Activated CD8-positive, alpha-beta T cell treated with anti-CD3 and anti-CD28 coated beads for 36 hours (primary cell): ENCODE measurements at regions of chr17 and their contacts with region 1.

Region 1: DNA sequence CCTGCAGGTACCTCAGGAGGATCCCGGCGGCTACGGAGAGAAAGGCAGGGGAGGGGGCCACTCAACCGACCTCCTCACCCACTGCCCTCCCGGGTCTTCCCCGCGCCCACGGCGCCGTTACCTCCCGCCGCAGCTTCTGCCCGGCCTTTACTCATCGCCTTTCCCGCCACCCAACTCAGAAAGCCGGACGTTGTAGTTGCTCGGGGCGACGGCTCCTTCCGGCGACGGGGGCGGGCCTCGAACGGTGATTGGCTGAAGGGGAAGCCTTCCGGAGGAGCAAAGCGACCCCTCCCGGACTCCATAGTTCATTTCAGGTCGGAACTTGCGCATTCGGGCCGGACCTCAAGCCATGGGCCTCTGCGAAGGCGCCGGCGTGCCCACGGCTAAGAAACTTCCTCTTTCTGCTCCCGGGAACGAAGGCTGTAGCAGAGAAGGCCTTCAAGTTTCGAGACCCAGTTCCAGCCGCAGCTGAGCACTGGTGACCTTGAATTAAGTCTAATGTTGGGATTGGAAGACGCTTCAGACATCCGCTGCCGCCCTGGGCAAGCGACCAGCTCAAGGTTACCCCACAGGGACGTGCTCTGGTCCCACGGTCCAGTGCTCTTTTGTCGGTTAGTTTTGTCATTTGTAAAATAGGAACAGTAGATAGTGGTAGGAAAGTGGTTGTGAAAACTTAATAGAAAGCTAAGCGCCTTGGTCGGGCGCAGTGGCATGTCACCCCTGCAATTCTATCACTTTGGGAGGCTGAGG is at the start of gene PSMC3IP:
- DNase-seq: peak; percentile 98
- ATAC-seq: peak; percentile 95
- H3K4me3 Mint-ChIP-seq: peak within 1 kb of the TSS; percentile 88
- H3K27ac Mint-ChIP-seq: peak within 1 kb of the TSS; percentile 97
- H3K4me1 Mint-ChIP-seq: peaks cover 35% of the 10 kb centered on the region
- H3K27me3 Mint-ChIP-seq: no peaks in the 10 kb centered on the region
- CTCF ChIP-seq: no peak
- total RNA-seq, gene PSMC3IP: 18.1 to 21.4 TPM

Region 2: GRCh38 chr17:42337442-42337841 is 240.3 kb before region 1 on chr17:
- CTCF ChIA-PET with region 1: no interaction called
- POLR2A ChIA-PET with region 1: no interaction called
- intact Hi-C with region 1: no loop called
- DNase-seq: peak; percentile 92
- ATAC-seq: peak; percentile 62
- H3K4me3 Mint-ChIP-seq: peak overlapping the region; percentile 56
- H3K27ac Mint-ChIP-seq: peak overlapping the region; percentile 89
- H3K4me1 Mint-ChIP-seq: peaks cover 77% of the 10 kb centered on the region
- H3K27me3 Mint-ChIP-seq: no peaks in the 10 kb centered on the region
- CTCF ChIP-seq: no peak

Region 3: DNA sequence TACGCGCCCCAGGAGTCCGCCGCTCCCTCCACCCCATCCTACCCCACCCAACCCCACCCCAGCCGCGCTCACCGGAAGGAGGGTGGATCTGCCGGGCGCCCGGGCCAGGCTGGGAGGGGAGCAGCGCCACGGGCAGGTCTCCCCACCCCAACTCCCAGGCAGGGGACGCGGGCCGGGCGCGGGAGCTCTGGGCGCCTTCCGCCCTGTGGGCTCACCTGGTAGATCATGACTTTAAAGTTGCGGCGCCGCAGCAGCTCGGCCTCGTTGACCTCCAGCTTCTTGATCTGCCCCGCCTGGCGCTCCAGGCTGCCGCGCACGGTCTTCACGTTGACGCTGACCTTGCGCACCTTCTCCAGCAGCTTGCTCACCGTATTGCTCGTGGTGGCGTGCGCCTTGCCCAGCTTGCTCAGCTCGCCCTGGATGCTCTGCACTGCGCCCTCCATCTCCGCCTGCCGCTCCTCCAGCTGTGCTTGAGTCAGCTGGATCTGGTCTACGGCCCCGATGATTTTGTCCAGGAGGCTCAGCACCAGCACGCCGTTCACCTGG is 155.2 kb before region 1 on chr17:
- CTCF ChIA-PET with region 1: no interaction called
- POLR2A ChIA-PET with region 1: no interaction called
- intact Hi-C with region 1: no loop called
- DNase-seq: peak; percentile 56
- ATAC-seq: peak; percentile 67
- H3K4me3 Mint-ChIP-seq: peak overlapping the region; percentile 70
- H3K27ac Mint-ChIP-seq: no peak overlapping the region
- H3K4me1 Mint-ChIP-seq: peaks cover 19% of the 10 kb centered on the region
- H3K27me3 Mint-ChIP-seq: peaks cover 33% of the 10 kb centered on the region
- CTCF ChIP-seq: no peak

Region 4: GRCh38 chr17:42536048-42536371 is 41.7 kb before region 1 on chr17 and contains the start of gene NAGLU:
- CTCF ChIA-PET with region 1: interaction called, 12 read pairs
- POLR2A ChIA-PET with region 1: interaction called, 5 read pairs
- intact Hi-C with region 1: no loop called
- DNase-seq: peak; percentile 91
- ATAC-seq: peak; percentile 87
- H3K4me3 Mint-ChIP-seq: peak within 1 kb of the TSS; percentile 84
- H3K27ac Mint-ChIP-seq: peak within 1 kb of the TSS; percentile 77
- H3K4me1 Mint-ChIP-seq: peaks cover 35% of the 10 kb centered on the region
- H3K27me3 Mint-ChIP-seq: no peaks in the 10 kb centered on the region
- CTCF ChIP-seq: no peak
- total RNA-seq, gene NAGLU: 10.8 to 11.4 TPM

Region 5: GRCh38 chr17:42598905-42599304 is 21.2 kb after region 1 on chr17:
- CTCF ChIA-PET with region 1: interaction called, 46 read pairs
- POLR2A ChIA-PET with region 1: interaction called, 4 read pairs
- intact Hi-C with region 1: no loop called
- DNase-seq: no peak
- ATAC-seq: no peak
- H3K4me3 Mint-ChIP-seq: no peak overlapping the region
- H3K27ac Mint-ChIP-seq: no peak overlapping the region
- H3K4me1 Mint-ChIP-seq: peaks cover 25% of the 10 kb centered on the region
- H3K27me3 Mint-ChIP-seq: no peaks in the 10 kb centered on the region
- CTCF ChIP-seq: no peak

Region 6: DNA sequence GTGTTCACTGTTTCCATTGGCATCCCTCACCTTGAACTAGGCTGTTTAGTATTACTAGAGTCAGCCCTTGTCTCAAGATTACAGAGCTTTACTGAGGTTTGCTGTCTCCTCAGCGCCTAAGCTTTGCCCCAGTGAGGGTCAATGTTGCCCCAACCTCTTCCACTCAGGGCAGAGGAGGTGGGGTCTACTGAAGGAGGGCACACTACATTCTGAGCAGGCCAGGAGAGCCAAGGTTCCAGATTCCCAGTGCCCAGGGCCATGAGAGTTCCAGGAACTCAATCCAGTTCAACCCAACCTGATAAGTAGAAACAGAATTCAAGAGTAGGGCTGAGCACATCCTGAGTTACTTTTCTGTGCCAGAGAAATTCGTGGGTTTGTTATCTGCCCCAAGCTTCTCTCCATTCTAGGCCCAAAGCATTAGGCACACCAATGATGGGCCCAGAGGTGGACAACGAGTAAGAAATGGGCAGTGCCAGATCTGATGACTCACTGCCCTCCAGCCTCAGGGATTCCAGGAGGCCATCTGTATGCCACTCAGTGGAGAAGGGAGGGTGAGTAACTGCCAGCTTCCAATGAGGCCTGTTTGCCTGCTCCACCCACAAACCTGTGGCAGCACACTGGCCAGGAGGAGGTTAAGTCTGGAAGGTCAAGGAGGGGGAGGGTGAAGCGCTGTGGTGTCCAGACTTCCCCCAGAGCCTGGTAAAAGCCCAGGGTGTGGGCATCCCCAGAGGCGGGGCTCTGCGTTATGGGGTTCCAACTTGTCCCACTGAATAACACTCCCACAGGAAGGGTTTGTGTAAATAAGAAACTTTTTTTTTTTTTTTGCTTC is 89.6 kb after region 1 on chr17:
- CTCF ChIA-PET with region 1: interaction called, 11 read pairs
- POLR2A ChIA-PET with region 1: interaction called, 3 read pairs
- intact Hi-C with region 1: no loop called
- DNase-seq: no peak
- ATAC-seq: no peak
- H3K4me3 Mint-ChIP-seq: no peak overlapping the region
- H3K27ac Mint-ChIP-seq: no peak overlapping the region
- H3K4me1 Mint-ChIP-seq: peaks cover 15% of the 10 kb centered on the region
- H3K27me3 Mint-ChIP-seq: peaks cover 26% of the 10 kb centered on the region
- CTCF ChIP-seq: no peak

Region 7: DNA sequence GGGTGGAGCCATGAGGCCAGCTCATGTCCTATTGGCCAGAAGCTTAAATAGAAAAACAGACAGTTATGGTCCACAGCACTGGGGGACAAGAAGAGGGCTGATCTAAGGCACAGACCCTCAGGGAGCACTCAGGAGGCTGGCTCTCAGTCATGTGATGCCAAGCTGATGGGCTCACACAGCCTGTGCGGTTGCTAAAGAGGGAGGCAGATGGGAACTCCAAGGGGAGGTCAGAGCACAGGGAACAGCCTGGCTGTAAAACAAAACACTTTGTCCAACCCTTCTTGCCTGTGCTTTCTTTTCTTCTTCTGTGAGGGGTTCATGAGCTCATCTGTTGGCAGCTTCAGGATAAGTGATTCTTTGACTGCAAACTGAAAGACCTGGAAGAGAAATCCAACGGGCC is 131.9 kb after region 1 on chr17:
- CTCF ChIA-PET with region 1: interaction called, 12 read pairs
- POLR2A ChIA-PET with region 1: interaction called, 4 read pairs
- intact Hi-C with region 1: no loop called
- DNase-seq: no peak
- ATAC-seq: no peak
- H3K4me3 Mint-ChIP-seq: no peak overlapping the region
- H3K27ac Mint-ChIP-seq: no peak overlapping the region
- H3K4me1 Mint-ChIP-seq: peaks cover 18% of the 10 kb centered on the region
- H3K27me3 Mint-ChIP-seq: no peaks in the 10 kb centered on the region
- CTCF ChIP-seq: no peak

Region 8: GRCh38 chr17:42773290-42774035 is 195.8 kb after region 1 on chr17 and contains the start of gene VPS25:
- CTCF ChIA-PET with region 1: interaction called, 16 read pairs
- POLR2A ChIA-PET with region 1: interaction called, 5 read pairs
- intact Hi-C with region 1: no loop called
- DNase-seq: peak; percentile 79
- ATAC-seq: peak; percentile 96
- H3K4me3 Mint-ChIP-seq: peak within 1 kb of the TSS; percentile 98
- H3K27ac Mint-ChIP-seq: peak within 1 kb of the TSS; percentile 95
- H3K4me1 Mint-ChIP-seq: peaks cover 21% of the 10 kb centered on the region
- H3K27me3 Mint-ChIP-seq: no peaks in the 10 kb centered on the region
- CTCF ChIP-seq: no peak
- total RNA-seq, gene VPS25: 63.4 to 67.2 TPM

Region 9: GRCh38 chr17:42997984-42998938 is 420.6 kb after region 1 on chr17 and contains the start of gene RPL27:
- CTCF ChIA-PET with region 1: interaction called, 12 read pairs
- POLR2A ChIA-PET with region 1: no interaction called
- intact Hi-C with region 1: no loop called
- DNase-seq: peak; percentile 99
- ATAC-seq: peak; percentile 97
- H3K4me3 Mint-ChIP-seq: peak within 1 kb of the TSS; percentile 96
- H3K27ac Mint-ChIP-seq: peak within 1 kb of the TSS; percentile 99
- H3K4me1 Mint-ChIP-seq: peaks cover 25% of the 10 kb centered on the region
- H3K27me3 Mint-ChIP-seq: no peaks in the 10 kb centered on the region
- CTCF ChIP-seq: peak; percentile 85
- total RNA-seq, gene RPL27: 1,640 to 1,647 TPM